ENCODE measurements at regions of chr9 and their contacts with region 1.

Region 1: DNA sequence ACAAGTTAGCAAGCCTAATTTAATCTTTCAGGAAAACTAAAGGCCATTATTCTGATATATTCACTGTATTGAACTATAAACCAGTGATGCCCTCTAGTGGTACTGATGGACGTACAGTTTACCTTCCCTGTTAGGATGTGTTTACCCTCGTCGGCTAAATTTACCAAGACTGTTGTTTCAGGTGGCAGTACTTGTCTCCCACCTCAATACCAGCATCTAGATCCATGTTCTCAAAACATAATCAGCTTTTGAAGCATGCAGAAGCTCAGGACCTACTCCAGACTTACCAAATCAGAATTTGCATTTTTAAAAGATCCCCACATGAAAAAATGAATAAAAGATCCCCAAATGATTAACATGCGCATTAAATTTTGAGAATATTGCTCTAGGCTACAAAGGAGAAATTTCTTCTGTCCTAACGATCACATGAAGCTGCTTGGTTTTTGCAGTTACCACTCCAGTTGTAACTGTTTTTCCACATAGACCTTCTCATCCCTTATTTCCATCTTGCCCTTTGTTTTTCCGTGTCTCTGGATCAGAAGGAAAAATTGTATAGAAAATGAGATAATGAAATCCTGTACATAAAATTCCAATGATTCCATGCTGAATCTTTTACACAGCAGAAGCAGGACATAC is 3.2 kb upstream of the BAAT start:
- DNase-seq: peak; percentile 50
- H3K4me3 ChIP-seq: no peak overlapping the region
- H3K27ac ChIP-seq: no peak overlapping the region
- H3K4me1 ChIP-seq: no peaks in the 10 kb centered on the region
- H3K27me3 ChIP-seq: no peaks in the 10 kb centered on the region
- CTCF ChIP-seq: peak; percentile 47 to 51
- POLR2A ChIP-seq: no peak

Region 2: GRCh38 chr9:100714372-100715099 is 673.5 kb before region 1 on chr9:
- CTCF ChIA-PET with region 1: interaction called, 4 read pairs
- POLR2A ChIA-PET with region 1: no interaction called
- dilution Hi-C with region 1: no loop called
- intact Hi-C with region 1: loop called (anchors 2 kb)
- DNase-seq: peak; percentile 57
- H3K4me3 ChIP-seq: no peak overlapping the region
- H3K27ac ChIP-seq: no peak overlapping the region
- H3K4me1 ChIP-seq: no peaks in the 10 kb centered on the region
- H3K27me3 ChIP-seq: no peaks in the 10 kb centered on the region
- CTCF ChIP-seq: peak; percentile 80 to 81
- POLR2A ChIP-seq: no peak

Region 3: DNA sequence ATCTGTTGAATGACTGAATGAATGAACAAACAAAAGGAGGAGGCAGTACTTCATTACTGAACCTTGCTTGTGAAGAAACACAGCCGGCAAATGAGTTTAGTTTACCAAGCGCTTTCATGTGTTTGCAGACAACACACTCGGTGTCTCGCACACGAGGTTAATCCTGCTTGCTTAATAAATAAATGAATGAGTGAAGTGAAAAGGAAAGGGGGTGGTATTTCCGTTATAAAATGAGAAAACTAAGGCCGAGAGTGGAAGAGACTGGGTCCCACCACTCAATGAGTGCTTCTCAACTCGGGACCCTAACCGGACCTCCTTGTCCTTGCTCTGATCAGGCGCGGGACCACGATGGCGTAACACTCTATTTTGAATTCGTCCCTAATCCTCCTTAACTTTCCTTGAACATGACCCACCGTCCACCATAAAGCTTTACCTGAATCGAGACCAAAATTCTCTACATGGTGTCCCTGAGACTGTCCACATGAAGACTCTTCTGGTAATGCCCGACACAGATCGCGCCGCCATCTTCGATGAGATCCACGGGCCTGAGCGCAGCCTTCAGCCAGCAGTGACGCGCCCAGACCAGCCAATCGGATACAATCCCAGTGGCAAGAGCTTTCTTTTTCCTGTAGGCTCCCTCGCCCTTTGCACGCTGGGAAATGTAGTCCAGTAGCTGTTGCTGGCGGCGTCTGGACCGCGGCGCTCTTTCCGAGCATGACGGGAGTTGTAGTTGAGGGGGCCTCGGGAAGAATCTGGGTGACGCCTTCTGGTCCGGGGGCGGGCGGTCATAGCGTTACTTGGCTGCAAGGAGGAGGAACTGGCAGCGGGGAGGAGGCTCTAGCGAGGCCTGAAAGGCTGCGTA is 10.3 kb after region 1 on chr9 and contains the starts of genes MRPL50 and ZNF189:
- CTCF ChIA-PET with region 1: interaction called, 22 read pairs
- POLR2A ChIA-PET with region 1: interaction called, 5 read pairs
- dilution Hi-C with region 1: no loop called
- intact Hi-C with region 1: loop called (anchors 1 kb)
- DNase-seq: peak; percentile 99
- H3K4me3 ChIP-seq: peak within 1 kb of the TSS; percentile 66 to 97 (median 92)
- H3K27ac ChIP-seq: peak within 1 kb of the TSS; percentile 87
- H3K4me1 ChIP-seq: peaks cover 26% of the 10 kb centered on the region
- H3K27me3 ChIP-seq: no peaks in the 10 kb centered on the region
- CTCF ChIP-seq: no peak
- POLR2A ChIP-seq: peak; percentile 78
- total RNA-seq, gene MRPL50: 8.6 and 9.7 TPM in 2 replicates
- total RNA-seq, gene ZNF189: 14.4 and 14.6 TPM in 2 replicates

Region 4: DNA sequence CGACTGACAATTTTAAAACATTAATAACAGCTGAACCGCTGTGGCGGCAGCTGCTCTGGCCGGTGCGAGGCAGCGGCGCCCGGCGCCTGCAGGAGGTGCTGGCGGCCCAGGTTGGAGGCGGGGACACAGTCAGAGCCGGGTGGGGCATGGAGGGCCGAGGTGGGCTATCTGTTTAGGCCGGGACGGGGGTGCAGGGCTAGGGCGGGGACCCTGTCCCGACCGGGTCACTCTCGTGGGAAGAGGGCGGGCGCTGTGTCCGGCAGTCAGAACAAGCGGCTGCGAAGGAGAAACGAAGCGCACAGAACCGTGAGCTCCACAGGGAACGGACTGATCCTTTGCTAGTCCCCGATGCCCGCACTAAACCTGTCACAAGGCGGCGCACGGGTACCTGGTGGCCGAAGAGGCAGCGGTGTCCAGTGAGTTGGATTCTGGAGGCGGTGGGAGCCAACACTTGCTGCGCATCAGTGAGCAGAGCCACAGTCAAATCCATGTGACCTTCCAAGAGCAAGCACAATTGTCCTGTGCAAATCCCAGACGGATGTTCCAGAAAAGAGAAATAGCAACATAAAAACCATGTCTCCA is 61.2 kb after region 1 on chr9:
- CTCF ChIA-PET with region 1: interaction called, 11 read pairs
- POLR2A ChIA-PET with region 1: no interaction called
- dilution Hi-C with region 1: no loop called
- intact Hi-C with region 1: no loop called
- DNase-seq: peak; percentile 77
- H3K4me3 ChIP-seq: peak overlapping the region; percentile 19 to 30 (median 23)
- H3K27ac ChIP-seq: no peak overlapping the region
- H3K4me1 ChIP-seq: no peaks in the 10 kb centered on the region
- H3K27me3 ChIP-seq: peaks cover 7 to 12% of the 10 kb centered on the region in 2 experiments
- CTCF ChIP-seq: peak; percentile 54 to 65
- POLR2A ChIP-seq: no peak